ENCODE measurements at regions of chr3 and their contacts with region 1.

Region 1: DNA sequence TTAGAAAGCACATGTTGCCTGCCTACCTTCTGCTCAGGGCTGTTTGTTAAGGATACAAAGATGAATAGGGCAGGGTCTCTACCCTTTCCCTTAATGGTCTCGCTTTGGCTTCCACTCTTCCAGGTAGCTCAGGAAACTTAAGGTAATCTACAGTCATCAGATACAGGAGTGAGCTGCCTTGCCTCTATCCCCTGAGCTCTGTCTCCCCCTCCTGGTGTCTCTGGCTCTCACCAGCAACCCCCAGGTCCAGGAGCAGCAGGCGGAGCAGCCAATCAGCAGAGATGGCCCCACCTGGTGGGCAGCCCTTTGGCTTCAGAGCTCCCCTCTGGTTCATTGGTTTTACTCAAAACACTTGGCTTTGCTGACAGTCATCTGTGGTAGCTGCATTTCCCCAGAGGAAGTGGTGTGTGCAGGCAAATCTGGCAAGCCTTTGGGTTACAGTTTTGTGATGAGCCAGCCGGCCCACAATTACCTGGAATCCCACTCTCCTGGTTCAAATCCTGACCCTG is 8.5 kb upstream of the CX3CR1 start:
- DNase-seq: peak; percentile 92
- H3K4me3 ChIP-seq: no peak overlapping the region; a peak in 1 of 4 replicates
- H3K27ac ChIP-seq: no peak overlapping the region
- H3K4me1 ChIP-seq: no peaks in the 10 kb centered on the region
- H3K27me3 ChIP-seq: no peaks in the 10 kb centered on the region
- CTCF ChIP-seq: peak; percentile 95
- EP300 ChIP-seq: no peak
- RAD21 ChIP-seq: peak; percentile 98

Region 2: DNA sequence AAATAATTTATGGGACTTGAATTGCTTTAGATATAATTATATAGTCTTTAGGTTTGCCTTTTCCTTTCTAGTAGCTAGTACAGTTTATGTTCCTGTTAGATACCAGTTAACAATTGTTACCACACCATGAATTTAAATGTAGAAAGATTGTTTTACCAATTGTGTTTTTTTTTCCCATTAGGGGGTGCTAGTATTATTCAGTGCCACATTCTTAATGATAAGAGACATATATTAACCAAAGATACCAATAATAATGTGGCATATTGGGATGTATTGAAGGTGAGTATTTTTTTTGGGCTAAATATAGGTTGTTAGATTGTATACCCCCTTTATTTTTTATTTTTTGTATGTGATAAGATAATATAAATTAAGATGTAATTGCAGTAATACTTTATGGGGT is 208.8 kb before region 1 on chr3:
- CTCF ChIA-PET with region 1: interaction called, 11 read pairs
- POLR2A ChIA-PET with region 1: no interaction called
- DNase-seq: no peak
- H3K4me3 ChIP-seq: no peak overlapping the region
- H3K27ac ChIP-seq: no peak overlapping the region
- H3K4me1 ChIP-seq: no peaks in the 10 kb centered on the region
- H3K27me3 ChIP-seq: no peaks in the 10 kb centered on the region
- CTCF ChIP-seq: no peak; the same call in 1 of the 2 replicates
- EP300 ChIP-seq: no peak
- RAD21 ChIP-seq: no peak

Region 3: DNA sequence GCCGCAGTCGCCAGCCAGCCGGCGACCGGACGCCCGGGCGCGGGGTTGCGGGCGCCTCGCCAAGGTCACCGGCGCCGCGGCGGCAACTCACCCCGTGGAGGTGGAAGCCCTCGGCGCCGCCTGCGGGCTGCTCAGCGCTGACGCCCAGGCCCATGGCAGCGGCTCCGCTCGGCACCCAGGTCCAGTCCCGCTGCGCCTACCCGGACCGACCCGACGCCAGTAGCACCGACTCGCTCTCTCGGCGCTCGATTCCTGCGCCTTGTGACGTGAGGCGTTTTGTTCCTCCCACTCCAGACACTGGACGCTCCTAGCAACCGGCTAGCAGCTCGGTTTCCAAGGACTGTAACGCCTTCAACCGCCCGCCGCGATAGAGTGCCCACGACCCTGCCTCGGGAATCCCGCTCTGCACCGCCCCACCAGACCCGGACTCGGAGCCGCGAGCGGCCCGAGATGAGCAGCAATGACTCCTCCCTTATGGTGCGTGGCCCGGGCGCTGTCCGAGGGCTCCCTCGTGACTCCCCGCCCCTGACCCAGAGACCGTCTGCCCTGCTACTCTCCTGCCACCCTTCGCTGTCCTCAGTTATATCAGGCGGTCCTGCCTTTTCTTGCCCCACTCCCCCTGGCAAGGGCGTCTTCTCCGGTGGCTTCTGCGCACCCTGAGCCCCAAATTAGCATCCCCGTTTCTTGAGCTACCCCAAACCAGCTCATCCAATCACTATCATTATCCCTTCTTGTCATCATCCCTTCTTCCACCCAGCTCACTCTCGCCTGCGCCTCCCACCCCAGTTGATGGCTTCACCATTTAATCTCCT is 180.8 kb before region 1 on chr3 and contains the starts of genes GORASP1 and TTC21A:
- CTCF ChIA-PET with region 1: interaction called, 20 read pairs
- POLR2A ChIA-PET with region 1: no interaction called
- DNase-seq: peak; percentile 92
- H3K4me3 ChIP-seq: peak within 1 kb of the TSS; percentile 97 to 99
- H3K27ac ChIP-seq: peak within 1 kb of the TSS; percentile 80 to 82
- H3K4me1 ChIP-seq: peaks cover 4 to 25% of the 10 kb centered on the region in 2 experiments; a peak in 2 of 4 replicates
- H3K27me3 ChIP-seq: no peaks in the 10 kb centered on the region
- CTCF ChIP-seq: no peak
- EP300 ChIP-seq: peak in 1 of 2 experiments; percentile 7; a peak in 1 of 4 replicates
- RAD21 ChIP-seq: peak; percentile 5; the same call in 1 of the 2 replicates
- polyA plus RNA-seq, gene GORASP1: 44.3 and 56.2 TPM in 2 replicates
- polyA plus RNA-seq, gene TTC21A: 3.9 and 4.2 TPM in 2 replicates

Region 4: GRCh38 chr3:39146064-39146983 is 142.0 kb before region 1 on chr3:
- CTCF ChIA-PET with region 1: interaction called, 12 read pairs
- POLR2A ChIA-PET with region 1: no interaction called
- DNase-seq: no peak
- H3K4me3 ChIP-seq: no peak overlapping the region
- H3K27ac ChIP-seq: peak overlapping the region; percentile 31 to 100
- H3K4me1 ChIP-seq: peaks cover 48 to 84% of the 10 kb centered on the region in 2 experiments
- H3K27me3 ChIP-seq: no peaks in the 10 kb centered on the region
- CTCF ChIP-seq: no peak
- EP300 ChIP-seq: no peak
- RAD21 ChIP-seq: no peak

Region 5: DNA sequence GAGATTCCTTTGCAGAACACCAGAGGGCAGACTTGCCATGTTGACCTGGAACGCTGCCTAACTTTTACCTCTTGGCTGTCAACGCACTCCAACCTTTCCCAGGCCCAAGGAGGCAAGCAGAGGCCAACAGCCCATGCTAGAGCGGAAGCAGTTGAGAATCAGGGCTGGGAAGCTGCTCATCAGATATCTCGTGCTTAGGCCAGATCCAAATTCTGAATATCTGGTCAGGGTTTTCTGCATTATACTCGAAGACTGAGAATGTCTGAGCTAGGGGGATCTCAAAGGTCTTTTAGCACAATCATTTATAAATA is 98.4 kb before region 1 on chr3:
- CTCF ChIA-PET with region 1: interaction called, 510 read pairs
- POLR2A ChIA-PET with region 1: no interaction called
- DNase-seq: peak; percentile 79
- H3K4me3 ChIP-seq: no peak overlapping the region
- H3K27ac ChIP-seq: no peak overlapping the region
- H3K4me1 ChIP-seq: peaks cover 0 to 2% of the 10 kb centered on the region in 2 experiments; a peak in 1 of 4 replicates
- H3K27me3 ChIP-seq: no peaks in the 10 kb centered on the region
- CTCF ChIP-seq: peak; percentile 77
- EP300 ChIP-seq: no peak
- RAD21 ChIP-seq: peak; percentile 85

Region 6: GRCh38 chr3:39232859-39233258 is 55.5 kb before region 1 on chr3:
- CTCF ChIA-PET with region 1: interaction called, 11 read pairs
- POLR2A ChIA-PET with region 1: no interaction called
- DNase-seq: no peak
- H3K4me3 ChIP-seq: no peak overlapping the region
- H3K27ac ChIP-seq: no peak overlapping the region
- H3K4me1 ChIP-seq: no peaks in the 10 kb centered on the region
- H3K27me3 ChIP-seq: peaks cover 24% of the 10 kb centered on the region; the same call in 1 of the 2 replicates
- CTCF ChIP-seq: no peak
- EP300 ChIP-seq: no peak
- RAD21 ChIP-seq: no peak

Region 7: DNA sequence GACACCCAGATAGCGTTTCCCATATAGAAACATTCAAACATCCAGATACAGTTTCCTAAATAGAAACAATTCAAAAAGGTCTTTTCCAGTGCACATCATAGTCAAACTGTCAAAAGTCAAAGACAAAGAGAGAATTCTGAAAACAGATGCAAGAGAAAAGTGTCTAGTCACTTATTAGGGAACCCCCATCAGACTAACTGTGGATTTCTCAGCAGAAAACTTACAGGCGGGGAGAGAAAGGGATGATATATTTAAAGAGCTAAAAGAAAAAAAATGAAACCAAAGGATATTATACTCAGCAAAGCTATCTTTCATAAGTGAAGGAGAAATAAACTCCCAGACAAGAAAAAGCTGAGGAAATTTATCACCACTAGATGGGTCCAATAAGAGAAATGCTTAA is 13.8 kb after region 1 on chr3:
- CTCF ChIA-PET with region 1: interaction called, 16 read pairs
- POLR2A ChIA-PET with region 1: no interaction called
- DNase-seq: no peak
- H3K4me3 ChIP-seq: no peak overlapping the region
- H3K27ac ChIP-seq: no peak overlapping the region
- H3K4me1 ChIP-seq: no peaks in the 10 kb centered on the region
- H3K27me3 ChIP-seq: no peaks in the 10 kb centered on the region
- CTCF ChIP-seq: no peak
- EP300 ChIP-seq: no peak
- RAD21 ChIP-seq: no peak

Measured in SK-N-SH (cell line).